ENCODE measurements at regions of chr10 and their contacts with region 1.

Region 1: GRCh38 chr10:31318854-31319601 is at the start of gene ZEB1:
- DNase-seq: peak; percentile 72 to 94
- H3K4me3 ChIP-seq: peak within 1 kb of the TSS; percentile 96 to 98
- H3K27ac ChIP-seq: peak within 1 kb of the TSS; percentile 95 to 98
- H3K4me1 ChIP-seq: peaks cover 0 to 9% of the 10 kb centered on the region in 2 donors
- H3K27me3 ChIP-seq: no peaks in the 10 kb centered on the region
- CTCF ChIP-seq: peak; percentile 47 to 73 (median 57)
- total RNA-seq, gene ZEB1: 77.3 TPM

Region 2: DNA sequence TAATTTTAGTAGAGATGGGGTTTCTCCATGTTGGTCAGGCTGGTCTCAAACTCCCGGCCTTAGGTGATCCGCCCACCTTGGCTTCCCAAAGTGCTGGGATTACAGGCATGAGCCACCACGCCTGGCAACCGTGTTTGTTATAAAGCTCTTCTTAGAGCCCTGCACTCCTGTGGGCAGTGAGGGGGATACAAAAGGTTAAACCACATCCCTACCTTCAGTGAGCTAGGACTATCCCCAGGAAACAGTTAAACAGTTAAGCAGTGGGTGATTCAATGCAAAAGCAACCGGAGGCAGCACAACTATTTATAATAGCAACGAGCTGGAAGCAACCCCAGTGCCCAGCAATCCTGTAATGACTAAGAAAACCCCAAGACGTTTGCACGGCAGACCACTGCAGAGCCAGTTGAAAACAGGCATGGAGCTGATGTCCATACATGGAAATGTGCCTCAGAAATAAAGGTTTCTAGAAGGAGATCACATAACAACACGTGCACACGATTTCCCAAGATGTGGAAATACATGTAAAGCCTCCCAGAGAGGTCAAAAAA is 582.3 kb before region 1 on chr10:
- intact Hi-C with region 1: loop called (anchors 5 kb)
- DNase-seq: peak; percentile 58 to 93
- H3K4me3 ChIP-seq: no peak overlapping the region
- H3K27ac ChIP-seq: peak overlapping the region; percentile 63 to 67
- H3K4me1 ChIP-seq: peaks cover 10 to 12% of the 10 kb centered on the region in 2 donors
- H3K27me3 ChIP-seq: no peaks in the 10 kb centered on the region
- CTCF ChIP-seq: no peak

Region 3: GRCh38 chr10:31075434-31075833 is 243.6 kb before region 1 on chr10:
- intact Hi-C with region 1: loop called (anchors 5 kb)
- DNase-seq: no peak
- H3K4me3 ChIP-seq: no peak overlapping the region
- H3K27ac ChIP-seq: peak overlapping the region; percentile 82 to 94
- H3K4me1 ChIP-seq: peaks cover 13 to 46% of the 10 kb centered on the region in 2 donors
- H3K27me3 ChIP-seq: no peaks in the 10 kb centered on the region
- CTCF ChIP-seq: no peak

Region 4: GRCh38 chr10:31274310-31274709 is 44.7 kb before region 1 on chr10:
- intact Hi-C with region 1: loop called (anchors 5 kb)
- DNase-seq: no peak
- H3K4me3 ChIP-seq: no peak overlapping the region
- H3K27ac ChIP-seq: no peak overlapping the region
- H3K4me1 ChIP-seq: peaks cover 0 to 4% of the 10 kb centered on the region in 2 donors
- H3K27me3 ChIP-seq: no peaks in the 10 kb centered on the region
- CTCF ChIP-seq: no peak

Region 5: DNA sequence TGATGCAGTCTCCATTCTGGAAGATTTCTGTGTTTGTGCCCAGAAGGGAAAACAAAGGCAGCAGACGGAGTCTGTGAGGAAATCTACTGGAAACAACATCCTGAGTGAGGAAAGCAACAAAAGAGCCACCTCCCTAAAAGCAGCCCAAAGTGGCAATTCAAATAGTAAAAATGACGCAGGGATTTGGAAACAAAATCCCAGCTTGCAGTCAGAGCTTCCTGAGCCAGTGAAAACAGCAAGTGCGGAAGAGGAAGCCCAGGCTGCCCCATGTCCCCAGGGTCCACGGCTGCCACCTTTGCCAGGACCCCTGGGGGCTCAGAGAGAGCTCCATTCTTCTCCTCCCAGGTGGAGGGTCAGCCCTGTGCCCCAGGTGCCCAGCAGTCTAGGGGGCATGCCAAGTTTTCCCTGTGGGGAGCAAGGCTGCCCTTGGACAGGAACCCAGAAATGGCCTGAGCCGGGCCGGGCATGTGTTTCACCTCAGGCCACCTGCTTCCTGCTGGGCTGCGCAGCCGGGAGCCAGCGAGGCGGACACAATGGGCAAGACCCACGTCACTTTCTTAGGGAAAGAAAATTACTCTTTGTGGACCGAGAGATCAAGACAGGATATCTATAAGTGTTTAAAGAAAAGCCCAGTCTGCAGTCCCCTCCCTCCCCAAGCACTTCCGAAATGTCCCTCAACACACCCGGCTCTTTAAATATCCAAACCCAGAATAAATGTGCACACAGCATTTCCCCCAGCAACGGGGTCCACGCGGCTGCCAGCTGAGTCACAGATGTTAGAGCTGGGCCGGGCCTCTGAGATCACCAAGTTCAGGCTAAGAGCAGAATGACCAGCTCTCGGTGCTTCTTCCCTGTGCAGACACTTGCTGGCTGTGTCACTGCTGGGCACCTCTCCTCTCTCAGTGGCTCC is 378.5 kb after region 1 on chr10:
- intact Hi-C with region 1: loop called (anchors 5 kb)
- DNase-seq: peak; percentile 90 to 98
- H3K4me3 ChIP-seq: peak overlapping the region; percentile 38 to 56
- H3K27ac ChIP-seq: peak overlapping the region; percentile 98 to 99
- H3K4me1 ChIP-seq: peaks cover 13 to 52% of the 10 kb centered on the region in 2 donors
- H3K27me3 ChIP-seq: no peaks in the 10 kb centered on the region
- CTCF ChIP-seq: no peak

Region 6: DNA sequence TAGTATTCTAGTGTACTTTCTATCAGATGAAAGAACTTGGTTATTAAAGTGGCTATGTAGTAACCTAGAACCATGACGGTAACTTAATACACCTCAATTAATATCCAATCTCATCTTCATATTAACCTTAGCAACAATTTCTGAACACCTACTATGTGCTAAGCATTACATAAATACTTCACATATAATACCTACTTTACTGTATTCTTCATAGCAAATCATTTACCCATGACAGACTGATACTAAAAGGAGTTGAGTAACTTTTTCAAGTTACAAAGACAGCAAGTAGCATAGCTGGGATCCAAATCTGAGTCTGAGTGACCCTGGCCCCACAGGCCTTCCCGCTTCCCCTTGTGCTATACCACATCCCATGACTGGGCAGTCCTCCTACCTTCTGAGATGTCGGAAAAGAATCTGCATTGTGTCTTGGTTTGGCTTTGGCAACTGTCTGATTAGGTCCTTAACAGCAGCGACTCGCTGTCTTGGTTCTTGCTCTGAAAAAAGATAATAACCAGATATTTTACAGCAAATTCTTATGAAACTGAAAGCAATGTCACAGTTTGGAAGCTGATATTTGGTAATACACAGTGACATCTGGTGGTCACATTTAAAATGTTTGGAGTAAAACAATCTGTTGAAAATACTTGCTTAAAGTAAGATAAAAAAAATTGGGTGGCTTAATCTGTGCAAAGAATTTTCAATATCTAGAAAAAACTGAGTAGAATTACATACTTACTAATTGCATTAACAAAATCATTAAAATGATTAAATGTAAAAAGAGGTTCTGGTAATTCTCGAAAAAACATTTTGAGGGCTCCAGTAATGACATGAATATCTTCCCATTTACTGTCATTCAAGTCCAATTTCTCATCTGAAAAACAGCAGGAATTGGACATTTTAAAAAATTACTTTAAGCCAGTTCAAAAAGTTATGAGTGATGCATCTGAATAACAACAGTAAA is 489.5 kb after region 1 on chr10:
- intact Hi-C with region 1: loop called (anchors 10 kb)
- DNase-seq: no peak
- H3K4me3 ChIP-seq: peak overlapping the region; percentile 20 to 49
- H3K27ac ChIP-seq: peak overlapping the region; percentile 38 to 66
- H3K4me1 ChIP-seq: no peaks in the 10 kb centered on the region
- H3K27me3 ChIP-seq: no peaks in the 10 kb centered on the region
- CTCF ChIP-seq: peak; percentile 49 to 66 (median 60)

Measured in ascending aorta (tissue), 2 donors.